Activated CD4-positive, alpha-beta T cell treated with anti-CD3 and anti-CD28 coated beads, Interleukin-2, amount 10 ng/mL, durations not matched to agents 7 days and 5 days (primary cell): ENCODE measurements at regions of chr16 and their contacts with region 1.

Region 1: GRCh38 chr16:89167425-89167941 is 4.1 kb upstream of the CDH15 start:
- DNase-seq: peak; percentile 85
- H3K4me3 Mint-ChIP-seq: no peak overlapping the region
- H3K27ac Mint-ChIP-seq: no peak overlapping the region
- H3K4me1 Mint-ChIP-seq: peaks cover 11% of the 10 kb centered on the region
- H3K27me3 Mint-ChIP-seq: peaks cover 3% of the 10 kb centered on the region

Region 2: GRCh38 chr16:88941913-88942909 is 225.3 kb before region 1 on chr16:
- CTCF ChIA-PET with region 1: interaction called, 11 read pairs
- POLR2A ChIA-PET with region 1: interaction called, 3 read pairs
- DNase-seq: peak; percentile 50
- H3K4me3 Mint-ChIP-seq: no peak overlapping the region
- H3K27ac Mint-ChIP-seq: no peak overlapping the region
- H3K4me1 Mint-ChIP-seq: peaks cover 6% of the 10 kb centered on the region
- H3K27me3 Mint-ChIP-seq: peaks cover 37% of the 10 kb centered on the region

Region 3: GRCh38 chr16:89155184-89155679 is 12.3 kb before region 1 on chr16:
- CTCF ChIA-PET with region 1: interaction called, 10 read pairs
- POLR2A ChIA-PET with region 1: interaction called, 3 read pairs
- DNase-seq: no peak
- H3K4me3 Mint-ChIP-seq: no peak overlapping the region
- H3K27ac Mint-ChIP-seq: no peak overlapping the region
- H3K4me1 Mint-ChIP-seq: peaks cover 2% of the 10 kb centered on the region
- H3K27me3 Mint-ChIP-seq: no peaks in the 10 kb centered on the region